Right ventricle myocardium inferior (tissue), 1 donor: ENCODE measurements at regions of chr7 and their contacts with region 1.

Region 1: DNA sequence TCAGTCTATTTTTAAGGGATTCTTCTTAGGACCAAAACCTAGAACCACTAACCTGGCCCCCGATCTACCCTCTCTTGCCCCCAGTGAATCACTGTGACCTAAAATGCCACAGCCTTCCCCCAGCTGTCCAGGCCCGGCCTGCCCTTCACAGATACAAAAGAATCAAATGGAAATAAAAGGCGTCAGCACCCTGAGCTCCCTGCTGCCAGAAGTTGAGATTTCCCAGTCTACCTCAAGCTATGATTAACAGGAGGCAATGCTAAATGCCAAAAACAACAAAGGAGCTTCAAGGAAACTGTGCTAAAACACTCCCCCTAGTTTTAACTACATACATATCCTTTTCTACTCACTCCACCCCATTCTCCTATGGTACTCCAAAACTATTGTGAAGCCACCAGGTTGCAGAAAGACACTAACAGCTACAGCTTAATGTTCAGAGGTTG is 67.8 kb downstream of the GSAP start:
- DNase-seq: peak; percentile 68
- ATAC-seq: peak; percentile 68

Region 2: DNA sequence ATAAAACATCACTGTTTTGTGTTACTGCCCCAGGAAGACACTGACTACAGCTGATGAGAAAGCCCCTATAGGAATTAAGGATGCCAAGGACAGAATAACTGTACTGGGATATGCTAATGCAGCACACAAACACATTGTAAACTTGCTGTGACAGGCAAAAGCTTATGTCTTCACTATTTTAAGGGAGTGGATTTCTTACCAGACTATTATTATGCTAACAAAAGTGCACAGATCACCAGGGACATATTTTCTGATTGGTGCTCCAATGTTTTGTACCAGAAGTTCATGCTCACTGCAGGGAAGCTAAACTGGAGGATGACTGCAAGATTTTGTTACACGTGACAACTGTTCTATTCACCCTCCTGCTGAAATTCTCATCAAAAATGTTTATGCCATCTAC is 140.6 kb after region 1 on chr7:
- intact Hi-C with region 1: no loop called
- DNase-seq: no peak
- ATAC-seq: no peak

Region 3: GRCh38 chr7:77550586-77550985 is 202.2 kb after region 1 on chr7:
- intact Hi-C with region 1: loop called (anchors 5 kb)
- DNase-seq: no peak
- ATAC-seq: no peak